GM18951 (cell line): ENCODE measurements at regions of chr2 and their contacts with region 1.

Region 1: DNA sequence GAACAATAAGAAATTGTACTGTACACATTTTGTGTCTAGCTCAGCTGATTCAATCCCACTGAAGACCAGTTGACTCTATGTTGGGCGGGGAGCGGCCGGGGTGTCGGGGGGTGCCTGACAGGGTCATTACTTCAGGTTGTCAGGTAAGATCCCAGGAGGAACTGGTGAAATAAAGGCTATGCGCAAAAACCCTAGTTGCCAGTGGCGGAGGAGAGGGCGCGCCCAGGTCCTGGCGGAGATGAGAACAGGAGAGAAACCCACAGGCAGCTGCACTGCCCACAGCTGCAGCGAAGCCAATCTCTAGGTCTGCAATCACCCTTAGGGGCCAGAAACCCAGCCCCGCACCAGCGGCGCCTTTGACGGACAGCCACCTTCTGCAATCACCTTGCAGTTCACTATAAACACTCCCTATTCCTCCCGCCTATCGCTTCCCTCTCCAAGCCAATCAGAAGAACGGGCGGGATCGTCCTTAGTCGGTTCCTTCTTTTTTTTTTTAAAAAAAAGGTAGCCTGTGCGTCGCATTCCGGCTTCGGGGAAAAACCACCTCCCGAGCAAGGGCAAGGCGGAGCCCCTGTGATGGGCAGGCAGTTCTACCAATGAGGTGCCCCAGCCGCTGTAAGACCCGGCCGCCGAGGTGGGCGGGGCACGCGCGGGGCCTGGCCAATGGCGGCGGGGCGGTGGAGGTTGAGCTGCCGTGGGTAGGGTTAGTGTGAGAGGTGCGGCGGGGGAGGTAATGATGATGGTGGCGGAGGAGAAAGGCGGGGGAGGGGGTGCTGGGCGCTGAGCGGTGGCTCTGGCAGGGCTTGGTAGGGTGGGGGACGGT is at the start of gene EHBP1:
- POLR2A ChIP-seq: peak; percentile 78

Region 2: GRCh38 chr2:62467475-62468321 is 237.5 kb before region 1 on chr2:
- in situ Hi-C with region 1: loop called (anchors 10 kb)
- POLR2A ChIP-seq: no peak

Region 3: GRCh38 chr2:63344575-63345284 is 639.5 kb after region 1 on chr2:
- in situ Hi-C with region 1: no loop called
- POLR2A ChIP-seq: no peak